H1 (cell line): ENCODE measurements at regions of chr9 and their contacts with region 1.

Region 1: DNA sequence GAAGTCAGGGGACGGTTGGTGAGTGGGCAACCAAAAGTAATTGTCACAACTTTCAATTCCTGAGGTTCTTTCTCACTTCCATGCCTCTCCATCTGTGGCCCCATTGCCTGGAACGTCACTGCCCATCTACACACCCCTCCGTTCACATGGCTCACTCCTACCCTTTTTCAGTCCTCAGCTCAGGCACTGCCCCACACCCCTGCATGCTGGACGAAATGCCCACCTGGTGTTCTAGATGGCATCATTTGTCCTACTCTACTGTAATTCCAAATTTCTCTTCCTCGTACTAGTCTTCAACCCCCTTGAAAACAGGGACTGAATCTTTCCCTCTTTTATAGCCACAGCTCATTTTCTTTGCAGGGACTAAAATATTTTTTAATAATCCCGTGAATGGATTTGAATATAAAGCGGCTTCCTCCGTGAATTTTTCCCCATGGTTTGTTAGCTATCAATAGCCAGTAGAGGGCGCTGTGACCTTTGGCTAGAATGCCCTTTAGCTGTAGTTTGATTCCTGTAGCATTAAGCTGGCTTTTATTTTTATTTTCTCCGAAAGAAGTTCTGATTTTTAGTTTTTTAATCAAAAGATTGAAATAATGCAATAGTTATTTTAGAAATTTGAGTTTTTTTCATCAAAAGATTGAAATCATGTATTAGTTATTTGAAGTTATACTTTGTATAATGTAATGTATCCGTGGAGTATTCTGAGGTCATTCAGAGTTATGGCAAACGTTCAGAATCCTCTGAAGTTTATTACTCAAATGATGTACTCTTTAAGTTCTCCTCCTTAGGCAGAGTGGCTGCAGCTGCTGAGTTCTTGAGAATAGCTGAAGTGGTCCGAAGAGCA is 232.1 kb downstream of the SH3GL2 start:
- DNase-seq: no peak
- H3K4me3 ChIP-seq: peak overlapping the region in 1 of 4 experiments; percentile 44; a peak in 1 of 8 replicates
- H3K27ac ChIP-seq: no peak overlapping the region
- H3K4me1 ChIP-seq: peaks cover 0 to 3% (median under 1%) of the 10 kb centered on the region in 4 experiments; a peak in 1 of 7 replicates
- H3K27me3 ChIP-seq: no peaks in the 10 kb centered on the region
- CTCF ChIP-seq: peak in 2 of 3 experiments; percentile 63 to 79; a peak in 3 of 4 replicates
- EP300 ChIP-seq: no peak
- POLR2A ChIP-seq: no peak
- RAD21 ChIP-seq: peak; percentile 87 to 92

Region 2: DNA sequence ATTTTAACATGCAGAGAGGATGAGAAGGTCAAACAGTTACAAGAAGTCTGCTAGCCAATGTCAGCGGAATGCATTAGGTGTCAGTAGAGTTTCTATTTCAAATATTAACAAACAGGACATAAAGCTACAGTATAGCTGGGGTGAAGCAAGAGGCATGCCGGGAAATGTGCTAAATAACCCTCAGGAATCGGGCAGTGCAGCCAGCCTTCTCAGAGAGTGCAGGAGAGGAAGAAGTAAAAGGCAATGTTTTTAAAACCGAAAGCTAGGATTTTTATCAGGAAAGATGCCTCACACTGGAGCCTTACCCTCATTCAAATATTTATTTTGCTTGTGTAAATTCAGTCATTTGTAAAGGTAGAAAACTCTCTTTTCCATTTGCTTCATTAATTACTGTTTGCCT is 291.2 kb before region 1 on chr9:
- CTCF ChIA-PET with region 1: interaction called, 46 read pairs
- POLR2A ChIA-PET with region 1: no interaction called
- DNase-seq: no peak
- H3K4me3 ChIP-seq: no peak overlapping the region
- H3K27ac ChIP-seq: no peak overlapping the region
- H3K4me1 ChIP-seq: no peaks in the 10 kb centered on the region; a peak in 1 of 7 replicates
- H3K27me3 ChIP-seq: no peaks in the 10 kb centered on the region
- CTCF ChIP-seq: no peak
- EP300 ChIP-seq: no peak
- POLR2A ChIP-seq: no peak
- RAD21 ChIP-seq: no peak

Region 3: DNA sequence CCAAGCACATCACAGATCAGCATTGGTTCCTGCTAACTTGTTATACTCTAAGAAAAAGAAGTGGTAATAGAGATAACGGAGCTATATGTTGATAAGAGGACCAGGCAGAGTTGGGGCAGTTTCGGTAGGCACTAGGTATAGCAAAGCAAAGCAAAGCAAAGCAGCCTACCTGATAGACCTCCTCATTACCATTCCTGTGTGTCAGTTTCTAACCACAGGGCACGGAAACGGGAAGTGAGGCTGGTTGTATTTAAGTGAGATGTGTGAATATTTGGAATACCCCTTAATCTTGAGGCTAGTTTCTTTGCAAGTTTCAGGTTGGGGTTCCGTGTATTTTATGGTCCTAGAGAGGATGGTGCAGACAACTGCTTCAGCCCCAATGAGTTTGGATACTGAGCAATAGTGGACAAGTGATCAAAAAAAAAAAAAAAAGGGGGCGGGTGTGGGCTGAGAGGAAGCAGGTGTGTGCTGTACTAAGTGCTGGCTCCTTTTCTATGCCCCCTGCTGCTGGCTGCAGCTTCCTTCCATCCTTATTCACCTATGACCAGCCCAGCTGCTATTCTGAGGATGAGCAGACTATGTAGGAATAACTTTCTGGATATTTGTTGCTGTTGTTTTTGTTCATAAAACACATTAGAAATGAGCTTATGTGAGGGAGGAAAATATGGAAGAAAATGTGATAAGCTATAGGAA is 48.8 kb before region 1 on chr9:
- CTCF ChIA-PET with region 1: no interaction called
- POLR2A ChIA-PET with region 1: no interaction called
- DNase-seq: no peak
- H3K4me3 ChIP-seq: no peak overlapping the region
- H3K27ac ChIP-seq: no peak overlapping the region
- H3K4me1 ChIP-seq: no peaks in the 10 kb centered on the region
- H3K27me3 ChIP-seq: no peaks in the 10 kb centered on the region
- CTCF ChIP-seq: no peak
- EP300 ChIP-seq: no peak
- POLR2A ChIP-seq: no peak
- RAD21 ChIP-seq: no peak

Region 4: GRCh38 chr9:17824191-17824590 is 13.2 kb after region 1 on chr9:
- CTCF ChIA-PET with region 1: interaction called, 17 read pairs
- POLR2A ChIA-PET with region 1: no interaction called
- DNase-seq: no peak
- H3K4me3 ChIP-seq: no peak overlapping the region
- H3K27ac ChIP-seq: no peak overlapping the region
- H3K4me1 ChIP-seq: no peaks in the 10 kb centered on the region
- H3K27me3 ChIP-seq: no peaks in the 10 kb centered on the region; a peak in 2 of 7 replicates
- CTCF ChIP-seq: peak in 1 of 3 experiments; percentile 15; a peak in 1 of 4 replicates
- EP300 ChIP-seq: no peak
- POLR2A ChIP-seq: no peak
- RAD21 ChIP-seq: peak; percentile 41 to 48

Region 5: GRCh38 chr9:17837965-17838364 is 27.0 kb after region 1 on chr9:
- CTCF ChIA-PET with region 1: interaction called, 24 read pairs
- POLR2A ChIA-PET with region 1: no interaction called
- DNase-seq: no peak
- H3K4me3 ChIP-seq: no peak overlapping the region
- H3K27ac ChIP-seq: no peak overlapping the region
- H3K4me1 ChIP-seq: no peaks in the 10 kb centered on the region
- H3K27me3 ChIP-seq: no peaks in the 10 kb centered on the region
- CTCF ChIP-seq: peak in 2 of 3 experiments; percentile 20 to 27; a peak in 2 of 4 replicates
- EP300 ChIP-seq: no peak
- POLR2A ChIP-seq: no peak
- RAD21 ChIP-seq: peak; percentile 23 to 43; a peak in 2 of 4 replicates

Region 6: GRCh38 chr9:18060245-18060934 is 249.4 kb after region 1 on chr9:
- CTCF ChIA-PET with region 1: interaction called, 10 read pairs
- POLR2A ChIA-PET with region 1: no interaction called
- DNase-seq: no peak
- H3K4me3 ChIP-seq: no peak overlapping the region
- H3K27ac ChIP-seq: no peak overlapping the region
- H3K4me1 ChIP-seq: no peaks in the 10 kb centered on the region
- H3K27me3 ChIP-seq: no peaks in the 10 kb centered on the region
- CTCF ChIP-seq: peak in 1 of 3 experiments; percentile 28; a peak in 1 of 4 replicates
- EP300 ChIP-seq: no peak
- POLR2A ChIP-seq: no peak
- RAD21 ChIP-seq: peak in 1 of 2 experiments; percentile 23; a peak in 2 of 4 replicates

Region 7: GRCh38 chr9:18189871-18190670 is 379.1 kb after region 1 on chr9:
- CTCF ChIA-PET with region 1: interaction called, 22 read pairs
- POLR2A ChIA-PET with region 1: no interaction called
- DNase-seq: no peak
- H3K4me3 ChIP-seq: no peak overlapping the region
- H3K27ac ChIP-seq: no peak overlapping the region
- H3K4me1 ChIP-seq: no peaks in the 10 kb centered on the region
- H3K27me3 ChIP-seq: no peaks in the 10 kb centered on the region
- CTCF ChIP-seq: no peak
- EP300 ChIP-seq: no peak
- POLR2A ChIP-seq: no peak
- RAD21 ChIP-seq: no peak